Dendritic cell treated with granulocyte-macrophage colony-stimulating factor and Interleukin-4, amounts not matched to agents 40 ng/mL and 50 ng/mL, for 4 days (primary cell): ENCODE measurements at regions of chr6 and their contacts with region 1.

Region 1: DNA sequence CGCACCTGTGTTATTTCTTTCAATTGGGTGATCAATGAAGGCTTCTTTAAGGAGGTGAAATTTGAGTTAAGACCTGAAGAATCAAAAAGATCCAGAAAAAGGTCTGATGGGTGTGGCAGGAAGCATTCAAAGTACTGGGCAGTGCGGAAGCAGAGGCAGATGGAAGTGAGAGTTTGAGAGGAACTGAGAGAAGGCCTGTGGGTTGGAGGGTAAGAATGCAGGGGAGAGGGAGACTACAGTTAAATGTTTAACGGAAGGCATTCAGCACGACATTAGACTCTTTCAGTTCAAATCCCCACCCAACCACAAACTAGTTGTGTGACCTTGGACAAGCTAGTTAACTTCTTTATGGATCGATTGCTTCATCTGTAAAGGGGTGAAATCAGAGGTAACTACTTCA is 50.5 kb upstream of the GCM1 start:
- H3K4me3 Mint-ChIP-seq: no peak overlapping the region
- H3K27ac Mint-ChIP-seq: peak overlapping the region; percentile 55
- H3K4me1 Mint-ChIP-seq: peaks cover 56% of the 10 kb centered on the region
- H3K27me3 Mint-ChIP-seq: no peaks in the 10 kb centered on the region

Region 2: DNA sequence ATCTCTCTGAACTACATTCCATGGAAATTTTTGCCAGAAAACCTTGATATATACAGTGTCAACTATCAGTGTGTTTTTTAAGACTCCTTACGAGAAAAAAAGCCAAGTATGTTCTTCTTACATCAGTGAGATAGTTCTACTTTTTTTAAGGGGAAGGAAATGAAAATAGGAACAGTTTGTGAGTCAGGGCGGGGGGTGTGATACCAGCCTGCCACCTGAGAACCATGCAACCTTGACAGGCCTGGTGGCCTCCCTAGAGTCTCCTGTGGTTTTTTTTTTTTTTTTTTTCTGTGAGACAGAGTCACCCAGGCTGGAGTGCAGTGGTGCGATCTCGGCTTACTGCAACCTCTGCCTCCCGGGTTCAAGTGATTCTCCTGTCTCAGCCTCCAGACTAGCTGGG is 45.8 kb after region 1 on chr6:
- intact Hi-C with region 1: loop called (anchors 5 kb)
- H3K4me3 Mint-ChIP-seq: no peak overlapping the region
- H3K27ac Mint-ChIP-seq: peak overlapping the region; percentile 66
- H3K4me1 Mint-ChIP-seq: peaks cover 44% of the 10 kb centered on the region
- H3K27me3 Mint-ChIP-seq: no peaks in the 10 kb centered on the region

Region 3: GRCh38 chr6:53544470-53545308 is 345.5 kb after region 1 on chr6 and contains the start of gene GCLC:
- intact Hi-C with region 1: no loop called
- H3K4me3 Mint-ChIP-seq: peak within 1 kb of the TSS; percentile 89
- H3K27ac Mint-ChIP-seq: peak within 1 kb of the TSS; percentile 81
- H3K4me1 Mint-ChIP-seq: peaks cover 72% of the 10 kb centered on the region
- H3K27me3 Mint-ChIP-seq: peaks cover 6% of the 10 kb centered on the region